Upper lobe of right lung (tissue), 1 donor: ENCODE measurements at regions of chr13 and their contacts with region 1.

Region 1: GRCh38 chr13:30125422-30126073 is 181.8 kb downstream of the KATNAL1 start:
- DNase-seq: no peak
- ATAC-seq: peak; percentile 91
- H3K4me3 ChIP-seq: no peak overlapping the region
- H3K27ac ChIP-seq: no peak overlapping the region
- H3K4me1 ChIP-seq: peaks cover 12% of the 10 kb centered on the region
- H3K27me3 ChIP-seq: no peaks in the 10 kb centered on the region
- CTCF ChIP-seq: no peak

Region 2: GRCh38 chr13:30181888-30182651 is 56.5 kb after region 1 on chr13:
- intact Hi-C with region 1: no loop called
- DNase-seq: no peak
- ATAC-seq: no peak
- H3K4me3 ChIP-seq: no peak overlapping the region
- H3K27ac ChIP-seq: no peak overlapping the region
- H3K4me1 ChIP-seq: no peaks in the 10 kb centered on the region
- H3K27me3 ChIP-seq: no peaks in the 10 kb centered on the region
- CTCF ChIP-seq: no peak

Region 3: GRCh38 chr13:30802953-30803478 is 677.5 kb after region 1 on chr13:
- intact Hi-C with region 1: loop called (anchors 10 kb)
- DNase-seq: peak; percentile 94
- ATAC-seq: peak; percentile 99
- H3K4me3 ChIP-seq: peak overlapping the region; percentile 51
- H3K27ac ChIP-seq: no peak overlapping the region
- H3K4me1 ChIP-seq: peaks cover 11% of the 10 kb centered on the region
- H3K27me3 ChIP-seq: no peaks in the 10 kb centered on the region
- CTCF ChIP-seq: peak; percentile 98